MCF 10A (cell line): ENCODE measurements at regions of chr4 and their contacts with region 1.

Region 1: GRCh38 chr4:140326395-140326993 is 47.0 kb upstream of the SCOC start:
- DNase-seq: peak; percentile 61
- H3K4me3 Mint-ChIP-seq: no peak overlapping the region
- H3K27ac Mint-ChIP-seq: no peak overlapping the region
- H3K4me1 Mint-ChIP-seq: no peaks in the 10 kb centered on the region
- H3K27me3 Mint-ChIP-seq: no peaks in the 10 kb centered on the region
- CTCF ChIP-seq: peak; percentile 76

Region 2: GRCh38 chr4:139734875-139735380 is 591.6 kb before region 1 on chr4:
- CTCF ChIA-PET with region 1: interaction called, 5 read pairs
- POLR2A ChIA-PET with region 1: no interaction called
- intact Hi-C with region 1: loop called (anchors 5 kb)
- DNase-seq: peak; percentile 35
- H3K4me3 Mint-ChIP-seq: peak overlapping the region; percentile 28
- H3K27ac Mint-ChIP-seq: no peak overlapping the region
- H3K4me1 Mint-ChIP-seq: peaks cover 6% of the 10 kb centered on the region
- H3K27me3 Mint-ChIP-seq: no peaks in the 10 kb centered on the region
- CTCF ChIP-seq: peak; percentile 52

Region 3: GRCh38 chr4:140153718-140154571 is 172.5 kb before region 1 on chr4 and contains the start of gene MAML3:
- CTCF ChIA-PET with region 1: interaction called, 4 read pairs
- POLR2A ChIA-PET with region 1: interaction called, 7 read pairs
- intact Hi-C with region 1: loop called (anchors 1 kb)
- DNase-seq: peak; percentile 94
- H3K4me3 Mint-ChIP-seq: peak within 1 kb of the TSS; percentile 95
- H3K27ac Mint-ChIP-seq: peak within 1 kb of the TSS; percentile 86
- H3K4me1 Mint-ChIP-seq: no peaks in the 10 kb centered on the region
- H3K27me3 Mint-ChIP-seq: no peaks in the 10 kb centered on the region
- CTCF ChIP-seq: no peak
- total RNA-seq, gene MAML3: 0.89 and 1.7 TPM in 2 replicates

Region 4: DNA sequence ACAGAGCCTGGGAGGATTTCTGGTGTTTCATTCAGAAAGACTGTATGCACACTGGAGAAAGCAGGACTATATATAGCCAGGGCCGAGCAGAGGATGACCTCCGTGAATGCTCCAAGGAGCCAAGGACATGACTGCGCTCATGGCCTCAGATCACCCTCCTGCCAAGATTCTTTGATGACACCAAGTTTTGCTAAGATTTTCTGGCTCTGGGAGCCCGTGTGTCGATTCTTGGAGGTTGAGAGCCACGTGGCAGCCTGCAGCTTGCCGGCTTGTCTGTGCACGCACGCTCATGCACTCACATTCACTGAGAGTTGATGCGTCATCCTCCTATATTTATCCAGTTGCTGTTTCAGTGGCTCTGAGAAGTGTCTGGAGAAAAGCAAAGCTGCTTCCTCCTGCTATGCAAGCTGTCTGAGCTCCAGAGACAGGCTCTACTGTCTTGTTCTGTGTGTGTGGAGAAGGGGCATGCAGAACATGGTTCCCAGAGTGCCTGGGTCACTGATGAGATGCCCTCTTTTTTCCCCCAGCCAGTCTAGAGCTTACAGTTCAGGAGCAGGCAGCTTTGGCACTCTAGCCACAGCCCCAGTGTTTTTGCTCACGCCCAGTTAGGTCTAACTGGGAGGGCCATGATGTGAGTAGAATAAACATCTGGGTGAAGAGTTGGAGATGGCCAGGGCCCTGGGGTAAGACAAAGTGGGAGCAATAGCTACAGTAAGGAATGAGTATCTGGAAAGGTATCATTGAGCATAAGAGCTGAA is 17.9 kb before region 1 on chr4:
- CTCF ChIA-PET with region 1: interaction called, 20 read pairs
- POLR2A ChIA-PET with region 1: interaction called, 3 read pairs
- intact Hi-C with region 1: no loop called
- DNase-seq: peak; percentile 91
- H3K4me3 Mint-ChIP-seq: peak overlapping the region; percentile 59
- H3K27ac Mint-ChIP-seq: peak overlapping the region; percentile 54
- H3K4me1 Mint-ChIP-seq: peaks cover 49% of the 10 kb centered on the region
- H3K27me3 Mint-ChIP-seq: no peaks in the 10 kb centered on the region
- CTCF ChIP-seq: no peak

Region 5: GRCh38 chr4:140359562-140360427 is 33.3 kb after region 1 on chr4:
- CTCF ChIA-PET with region 1: interaction called, 42 read pairs
- POLR2A ChIA-PET with region 1: no interaction called
- intact Hi-C with region 1: no loop called
- DNase-seq: peak; percentile 90
- H3K4me3 Mint-ChIP-seq: no peak overlapping the region
- H3K27ac Mint-ChIP-seq: no peak overlapping the region
- H3K4me1 Mint-ChIP-seq: peaks cover 8% of the 10 kb centered on the region
- H3K27me3 Mint-ChIP-seq: peaks cover 13% of the 10 kb centered on the region
- CTCF ChIP-seq: peak; percentile 80

Region 6: DNA sequence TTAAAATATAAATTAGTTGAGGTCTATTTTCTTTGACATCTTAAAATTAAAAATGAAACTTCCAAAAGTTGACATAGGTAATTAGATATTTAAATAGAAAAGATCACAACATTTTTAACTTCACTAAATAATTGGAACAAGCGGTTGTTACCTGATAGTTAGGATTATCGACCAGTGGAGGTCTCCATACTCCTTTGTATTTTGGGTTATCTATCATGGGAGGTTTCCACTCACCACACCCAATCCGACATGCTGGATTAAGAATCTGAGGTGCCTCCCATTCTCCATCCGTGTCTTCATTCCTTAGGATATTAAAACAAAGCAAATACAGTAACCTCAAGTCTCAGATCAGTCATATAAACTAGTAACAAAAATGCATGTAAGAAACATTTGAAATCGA is 69.2 kb after region 1 on chr4:
- CTCF ChIA-PET with region 1: no interaction called
- POLR2A ChIA-PET with region 1: no interaction called
- intact Hi-C with region 1: no loop called
- DNase-seq: peak; percentile 4
- H3K4me3 Mint-ChIP-seq: no peak overlapping the region
- H3K27ac Mint-ChIP-seq: no peak overlapping the region
- H3K4me1 Mint-ChIP-seq: no peaks in the 10 kb centered on the region
- H3K27me3 Mint-ChIP-seq: no peaks in the 10 kb centered on the region
- CTCF ChIP-seq: no peak

Region 7: GRCh38 chr4:140884431-140885058 is 558.1 kb after region 1 on chr4:
- CTCF ChIA-PET with region 1: no interaction called
- POLR2A ChIA-PET with region 1: no interaction called
- intact Hi-C with region 1: loop called (anchors 1 kb)
- DNase-seq: peak; percentile 80
- H3K4me3 Mint-ChIP-seq: no peak overlapping the region
- H3K27ac Mint-ChIP-seq: no peak overlapping the region
- H3K4me1 Mint-ChIP-seq: no peaks in the 10 kb centered on the region
- H3K27me3 Mint-ChIP-seq: peaks cover 14% of the 10 kb centered on the region
- CTCF ChIP-seq: peak; percentile 75